ENCODE measurements at regions of chr2 and their contacts with region 1.

Region 1: GRCh38 chr2:39059366-39059952 is 61.4 kb downstream of the SOS1 start:
- DNase-seq: no peak
- ATAC-seq: peak; percentile 36

Region 2: DNA sequence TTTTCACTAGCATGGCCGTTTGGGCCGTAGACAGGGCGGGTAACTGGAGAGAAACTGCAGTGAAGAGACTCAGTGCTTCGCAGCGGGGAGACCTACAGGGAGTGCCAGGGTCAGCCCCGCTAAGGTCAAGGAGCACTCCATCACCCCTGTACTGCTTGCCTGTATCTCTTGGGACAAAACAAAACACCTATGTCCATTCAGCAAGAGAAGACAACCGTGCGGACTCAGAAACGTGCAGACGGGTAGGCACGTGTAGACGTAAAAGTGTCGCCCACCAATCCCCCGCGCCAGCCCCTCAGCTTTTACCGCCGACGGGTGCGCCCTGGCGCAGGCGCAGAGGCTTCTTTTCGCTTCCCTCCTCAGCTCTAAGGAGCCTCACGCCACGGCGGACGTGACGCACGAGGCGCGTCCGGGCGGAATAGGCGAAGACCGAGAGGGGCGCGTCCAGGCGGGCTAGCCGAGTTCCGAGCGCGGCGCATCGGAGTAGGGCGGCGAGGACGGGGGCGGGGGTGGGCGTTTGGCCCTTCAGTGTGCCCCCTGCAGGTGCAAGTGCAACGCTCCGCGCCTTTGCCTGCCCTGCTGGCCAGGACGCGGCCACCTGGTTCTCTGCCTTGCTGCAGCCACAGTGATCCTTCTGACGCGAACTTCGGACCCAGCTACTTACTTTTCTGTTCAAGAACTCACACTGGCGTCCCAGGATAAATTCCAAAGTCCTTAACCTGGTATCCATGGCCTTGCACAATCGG is 64.7 kb after region 1 on chr2:
- intact Hi-C with region 1: loop called (anchors 5 kb)
- DNase-seq: peak; percentile 98
- ATAC-seq: peak; percentile 92